A673 (cell line): ENCODE measurements at regions of chr10 and their contacts with region 1.

Region 1: GRCh38 chr10:89701238-89702120 is at the start of gene KIF20B:
- DNase-seq: peak; percentile 99
- H3K4me3 ChIP-seq: peak within 1 kb of the TSS; percentile 65
- H3K27ac ChIP-seq: peak within 1 kb of the TSS; percentile 83
- H3K4me1 ChIP-seq: peaks cover 11% of the 10 kb centered on the region
- H3K27me3 ChIP-seq: no peaks in the 10 kb centered on the region
- CTCF ChIP-seq: peak; percentile 35; the same call in 1 of the 2 replicates
- total RNA-seq, gene KIF20B: 74.3 and 78.9 TPM in 2 replicates

Region 2: DNA sequence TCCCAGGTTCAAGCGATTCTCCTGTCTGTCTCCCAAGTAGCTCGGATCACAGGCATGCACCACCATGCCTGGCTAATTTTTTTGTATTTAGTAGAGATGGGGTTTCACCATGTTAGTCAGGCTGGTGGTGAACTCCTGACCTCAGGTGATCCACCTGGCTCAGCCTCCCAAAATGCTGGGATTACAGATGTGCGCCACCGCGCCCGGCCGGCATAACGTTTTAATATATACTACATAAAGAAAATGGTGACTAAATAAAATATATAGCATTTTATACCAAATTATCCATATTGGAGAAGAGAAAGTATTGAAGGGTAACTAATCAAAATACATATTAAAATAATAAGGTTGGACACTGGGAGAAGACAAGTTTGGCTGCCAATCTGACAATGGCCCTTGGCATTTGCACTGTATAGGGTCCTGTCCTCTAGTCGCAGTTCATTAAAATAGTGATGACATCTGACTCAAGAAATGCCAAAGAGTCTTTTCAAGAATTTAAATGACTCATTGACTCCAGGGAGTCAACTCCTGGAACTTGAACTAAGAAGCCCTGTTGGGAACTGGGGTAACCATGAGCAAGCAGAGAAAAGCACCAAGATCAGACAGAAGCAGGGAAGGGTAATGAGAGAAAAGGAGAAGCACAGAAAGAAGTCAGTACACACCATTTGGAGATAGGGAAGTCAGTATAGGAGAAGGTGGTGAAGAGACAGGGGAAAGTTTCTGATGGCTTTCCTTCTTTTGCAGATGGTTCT is 585.4 kb before region 1 on chr10:
- CTCF ChIA-PET with region 1: no interaction called
- POLR2A ChIA-PET with region 1: no interaction called
- intact Hi-C with region 1: no loop called
- DNase-seq: peak; percentile 44
- H3K4me3 ChIP-seq: no peak overlapping the region
- H3K27ac ChIP-seq: no peak overlapping the region
- H3K4me1 ChIP-seq: peaks cover 6% of the 10 kb centered on the region
- H3K27me3 ChIP-seq: no peaks in the 10 kb centered on the region
- CTCF ChIP-seq: no peak

Region 3: GRCh38 chr10:89490596-89491335 is 210.7 kb before region 1 on chr10:
- CTCF ChIA-PET with region 1: no interaction called
- POLR2A ChIA-PET with region 1: no interaction called
- intact Hi-C with region 1: no loop called
- DNase-seq: no peak
- H3K4me3 ChIP-seq: no peak overlapping the region
- H3K27ac ChIP-seq: no peak overlapping the region
- H3K4me1 ChIP-seq: peaks cover 6% of the 10 kb centered on the region
- H3K27me3 ChIP-seq: no peaks in the 10 kb centered on the region
- CTCF ChIP-seq: no peak

Region 4: GRCh38 chr10:89563861-89564478 is 137.5 kb before region 1 on chr10:
- CTCF ChIA-PET with region 1: no interaction called
- POLR2A ChIA-PET with region 1: no interaction called
- intact Hi-C with region 1: loop called (anchors 5 kb)
- DNase-seq: peak; percentile 63
- H3K4me3 ChIP-seq: no peak overlapping the region
- H3K27ac ChIP-seq: no peak overlapping the region
- H3K4me1 ChIP-seq: no peaks in the 10 kb centered on the region
- H3K27me3 ChIP-seq: no peaks in the 10 kb centered on the region
- CTCF ChIP-seq: peak; percentile 83

Region 5: DNA sequence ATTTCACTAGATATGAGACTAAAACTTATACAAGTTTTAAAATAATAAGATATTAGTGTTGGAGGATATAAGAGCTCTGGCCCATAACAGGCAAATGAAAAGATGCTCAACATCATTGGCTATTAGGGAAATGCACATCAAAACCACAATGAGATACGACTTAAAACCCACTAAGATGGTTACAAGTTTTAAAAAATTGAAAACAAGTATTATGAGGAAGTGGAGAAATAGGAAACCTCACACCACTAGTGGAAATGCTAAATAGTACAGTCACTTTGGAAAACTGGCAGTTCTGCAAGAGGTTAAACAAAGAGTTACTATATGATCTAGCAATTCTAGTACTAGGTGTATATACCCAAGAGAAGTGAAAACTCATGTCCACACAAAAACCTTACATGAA is 73.6 kb before region 1 on chr10:
- CTCF ChIA-PET with region 1: no interaction called
- POLR2A ChIA-PET with region 1: no interaction called
- intact Hi-C with region 1: no loop called
- DNase-seq: no peak
- H3K4me3 ChIP-seq: no peak overlapping the region
- H3K27ac ChIP-seq: no peak overlapping the region
- H3K4me1 ChIP-seq: peaks cover 12% of the 10 kb centered on the region
- H3K27me3 ChIP-seq: no peaks in the 10 kb centered on the region
- CTCF ChIP-seq: no peak

Region 6: GRCh38 chr10:89643431-89644331 is 57.8 kb before region 1 on chr10:
- CTCF ChIA-PET with region 1: no interaction called
- POLR2A ChIA-PET with region 1: interaction called, 3 read pairs
- intact Hi-C with region 1: loop called (anchors 1 kb)
- DNase-seq: peak; percentile 98
- H3K4me3 ChIP-seq: peak overlapping the region; percentile 90
- H3K27ac ChIP-seq: peak overlapping the region; percentile 92
- H3K4me1 ChIP-seq: peaks cover 39% of the 10 kb centered on the region
- H3K27me3 ChIP-seq: no peaks in the 10 kb centered on the region
- CTCF ChIP-seq: no peak